ENCODE measurements at regions of chr16 and their contacts with region 1.

Region 1: GRCh38 chr16:70627696-70628095 is 18.7 kb upstream of the IL34 start:
- DNase-seq: no peak
- ATAC-seq: no peak
- H3K4me3 ChIP-seq: no peak overlapping the region
- H3K27ac ChIP-seq: no peak overlapping the region
- H3K4me1 ChIP-seq: no peaks in the 10 kb centered on the region
- H3K27me3 ChIP-seq: no peaks in the 10 kb centered on the region
- CTCF ChIP-seq: no peak
- POLR2A ChIP-seq: no peak
- RAD21 ChIP-seq: no peak

Region 2: DNA sequence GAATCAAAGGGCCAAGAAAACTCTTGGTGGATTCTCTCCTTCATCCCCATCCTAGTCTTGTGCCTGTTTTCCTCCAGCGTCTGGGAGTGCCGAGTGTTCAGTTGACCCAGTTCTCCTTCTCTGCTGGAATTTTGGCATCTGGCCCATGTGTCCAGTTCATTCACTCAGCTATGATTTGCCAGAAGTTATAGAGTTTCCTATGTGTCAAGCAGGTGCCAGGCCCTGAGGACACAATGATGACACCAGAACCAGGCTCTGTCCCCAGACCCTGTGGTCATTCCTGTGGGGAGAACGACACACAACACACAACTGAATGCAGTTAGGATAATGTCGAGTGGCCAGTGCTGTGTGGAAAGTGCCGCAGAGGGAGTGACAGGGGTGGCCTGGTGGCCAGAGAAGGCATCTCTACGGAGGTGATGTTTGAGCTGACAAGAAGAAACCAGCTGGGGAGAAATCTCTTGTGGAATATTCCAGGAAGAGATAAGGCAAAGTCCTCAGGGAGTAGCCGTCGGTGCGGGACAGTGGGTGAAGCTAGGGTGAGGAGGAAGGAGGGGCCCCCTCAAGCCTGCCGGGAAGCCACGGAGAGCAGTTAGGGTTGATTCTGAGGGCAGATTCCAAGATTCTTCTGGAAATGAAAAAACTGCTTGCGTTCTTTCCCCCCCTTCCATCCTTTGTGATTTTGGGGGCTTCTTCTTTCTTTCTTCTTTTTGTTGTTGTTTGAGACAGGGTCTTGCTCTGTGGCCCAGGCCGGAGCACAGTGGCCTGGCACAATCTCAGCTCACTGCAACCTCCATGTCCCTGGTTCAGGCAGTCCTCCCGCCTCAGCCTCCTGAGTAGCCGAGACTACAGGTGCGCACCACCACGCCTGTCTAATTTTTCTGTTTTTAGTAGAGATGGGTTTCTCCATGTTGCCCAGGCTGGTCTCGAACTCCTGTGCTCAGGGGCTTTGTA is 17.1 kb before region 1 on chr16:
- CTCF ChIA-PET with region 1: no interaction called
- POLR2A ChIA-PET with region 1: no interaction called
- dilution Hi-C with region 1: no loop called
- in situ Hi-C with region 1: no loop called
- intact Hi-C with region 1: loop called (anchors 2 kb)
- DNase-seq: no peak
- ATAC-seq: no peak
- H3K4me3 ChIP-seq: no peak overlapping the region
- H3K27ac ChIP-seq: no peak overlapping the region
- H3K4me1 ChIP-seq: no peaks in the 10 kb centered on the region
- H3K27me3 ChIP-seq: peaks cover 8% of the 10 kb centered on the region
- CTCF ChIP-seq: no peak
- POLR2A ChIP-seq: no peak
- RAD21 ChIP-seq: no peak

Region 3: GRCh38 chr16:71351558-71351901 is 723.8 kb after region 1 on chr16:
- CTCF ChIA-PET with region 1: no interaction called
- POLR2A ChIA-PET with region 1: no interaction called
- dilution Hi-C with region 1: no loop called
- in situ Hi-C with region 1: no loop called
- intact Hi-C with region 1: no loop called
- DNase-seq: no peak
- ATAC-seq: no peak
- H3K4me3 ChIP-seq: no peak overlapping the region
- H3K27ac ChIP-seq: no peak overlapping the region
- H3K4me1 ChIP-seq: no peaks in the 10 kb centered on the region
- H3K27me3 ChIP-seq: peaks cover 16% of the 10 kb centered on the region
- CTCF ChIP-seq: no peak
- POLR2A ChIP-seq: no peak
- RAD21 ChIP-seq: no peak

Measured in IMR-90 (cell line).